AG04449 (cell line): ENCODE measurements at regions of chr1 and their contacts with region 1.

Region 1: GRCh38 chr1:59699227-59699847 is 115.4 kb upstream of the HOOK1 start:
- DNase-seq: no peak
- H3K4me3 ChIP-seq: no peak overlapping the region
- CTCF ChIP-seq: peak; percentile 75

Region 2: GRCh38 chr1:58739856-58740466 is 959.4 kb before region 1 on chr1:
- CTCF ChIA-PET with region 1: interaction called, 17 read pairs
- POLR2A ChIA-PET with region 1: no interaction called
- DNase-seq: no peak
- H3K4me3 ChIP-seq: no peak overlapping the region
- CTCF ChIP-seq: peak; percentile 32

Region 3: DNA sequence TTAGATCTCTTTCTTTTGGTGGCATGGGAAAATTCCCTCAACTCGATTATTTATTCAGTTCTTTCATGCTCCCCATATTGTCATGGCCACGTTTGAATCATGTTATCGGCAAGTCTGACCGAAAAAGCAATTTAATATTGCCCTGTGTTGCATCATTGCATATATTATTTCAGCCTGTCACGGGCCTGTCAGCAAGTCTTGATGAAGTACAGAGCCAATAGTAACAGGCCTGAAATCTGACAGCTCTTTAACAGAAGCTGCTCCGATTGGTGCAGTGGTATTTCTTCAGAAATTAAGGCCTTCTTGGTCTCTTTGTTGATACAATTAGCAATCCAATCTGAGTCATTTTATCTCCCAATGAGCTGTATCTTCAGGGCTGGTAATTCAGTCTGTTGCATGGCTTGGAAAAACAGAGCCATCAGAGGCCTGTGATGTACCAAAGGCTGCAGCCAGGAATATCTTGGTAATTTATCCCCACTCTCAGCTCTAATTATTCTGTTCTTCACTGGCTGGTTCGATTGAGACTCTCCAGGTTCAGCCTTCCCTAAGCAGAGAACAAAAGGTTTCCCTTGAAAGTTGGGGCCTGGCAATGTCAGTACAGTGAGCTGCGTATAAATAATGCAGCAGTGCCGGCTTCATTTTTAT is 253.0 kb before region 1 on chr1:
- CTCF ChIA-PET with region 1: interaction called, 10 read pairs
- POLR2A ChIA-PET with region 1: no interaction called
- DNase-seq: peak; percentile 86
- H3K4me3 ChIP-seq: no peak overlapping the region
- CTCF ChIP-seq: no peak

Region 4: GRCh38 chr1:59678493-59679228 is 20.7 kb before region 1 on chr1:
- CTCF ChIA-PET with region 1: interaction called, 16 read pairs
- POLR2A ChIA-PET with region 1: no interaction called
- DNase-seq: peak; percentile 98
- H3K4me3 ChIP-seq: no peak overlapping the region
- CTCF ChIP-seq: no peak

Region 5: GRCh38 chr1:59686170-59686569 is 13.2 kb before region 1 on chr1:
- CTCF ChIA-PET with region 1: interaction called, 16 read pairs
- POLR2A ChIA-PET with region 1: no interaction called
- DNase-seq: no peak
- H3K4me3 ChIP-seq: no peak overlapping the region
- CTCF ChIP-seq: no peak

Region 6: DNA sequence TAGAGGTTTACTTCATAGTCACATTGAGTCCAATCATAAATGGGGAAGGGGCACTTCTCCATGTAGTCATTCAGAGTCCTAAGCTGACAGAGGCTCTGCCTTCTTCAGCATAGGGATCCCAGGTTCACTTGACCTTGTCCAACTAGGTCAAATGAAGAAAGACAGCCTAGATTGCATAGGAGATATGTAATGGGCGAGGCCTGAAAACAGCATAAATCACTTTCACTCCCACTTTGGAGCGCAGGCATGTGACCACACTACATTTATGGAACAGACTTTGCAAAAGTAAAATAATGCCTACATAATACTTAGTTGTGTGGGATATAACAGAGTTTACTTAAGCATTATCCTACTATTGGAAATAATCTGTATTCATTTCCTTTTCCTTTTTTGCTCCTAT is 167.1 kb after region 1 on chr1:
- CTCF ChIA-PET with region 1: no interaction called
- POLR2A ChIA-PET with region 1: no interaction called
- DNase-seq: no peak
- H3K4me3 ChIP-seq: no peak overlapping the region
- CTCF ChIP-seq: no peak

Region 7: DNA sequence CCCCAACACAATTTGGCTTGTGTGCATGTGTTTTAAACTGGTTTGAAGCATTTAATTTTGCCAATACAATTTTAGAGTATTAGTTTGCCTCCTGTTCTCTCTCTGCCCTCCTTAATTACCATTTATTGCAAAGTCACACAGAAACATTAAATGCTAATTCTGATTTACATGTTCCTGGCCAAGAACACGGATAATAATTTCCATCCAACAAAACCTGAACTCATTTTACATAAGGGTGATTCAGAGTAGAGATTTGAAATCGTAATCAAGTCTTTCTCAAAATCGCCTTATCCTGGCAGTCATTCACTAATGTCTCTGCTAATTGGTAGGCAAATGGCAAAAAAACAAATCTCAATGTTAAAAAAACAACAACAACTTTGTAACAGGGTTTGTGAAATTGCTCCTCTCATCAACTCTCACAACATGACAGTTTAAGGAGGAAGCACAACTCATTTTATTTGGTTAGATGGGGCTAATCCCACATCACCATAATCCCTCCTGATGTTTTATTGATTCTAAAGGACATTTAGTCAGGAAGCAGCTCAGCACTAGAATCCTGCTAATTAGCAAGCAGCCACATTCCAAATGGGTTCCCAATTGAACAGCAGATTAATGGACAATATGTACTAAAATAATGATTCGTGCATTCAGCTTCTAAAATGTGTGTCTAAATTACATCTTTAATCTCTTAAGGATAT is 318.3 kb after region 1 on chr1:
- CTCF ChIA-PET with region 1: no interaction called
- POLR2A ChIA-PET with region 1: no interaction called
- DNase-seq: no peak
- H3K4me3 ChIP-seq: no peak overlapping the region
- CTCF ChIP-seq: no peak